PC-9 (cell line): ENCODE measurements at regions of chr2 and their contacts with region 1.

Region 1: DNA sequence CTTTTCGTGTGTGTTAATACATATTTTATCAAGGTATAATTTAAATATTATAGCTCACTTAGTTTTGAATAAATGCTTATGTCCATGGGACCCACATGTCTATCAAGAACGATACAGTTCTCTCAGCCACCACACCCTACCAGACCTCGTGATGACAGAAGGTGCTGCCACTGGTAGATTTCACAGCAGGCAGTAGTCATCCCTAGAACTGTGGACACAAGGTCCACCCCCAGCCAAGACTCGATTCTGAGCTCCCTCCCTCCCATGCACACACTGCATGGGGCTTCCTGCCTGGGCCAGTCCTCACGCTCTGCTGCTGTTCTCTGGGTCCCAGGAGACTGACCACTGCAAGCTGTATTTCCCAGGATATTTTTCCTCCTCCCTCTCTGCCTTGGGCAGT is 26.5 kb upstream of the CREB1 start:
- DNase-seq: no peak
- H3K4me3 ChIP-seq: no peak overlapping the region
- H3K27ac ChIP-seq: no peak overlapping the region
- H3K4me1 ChIP-seq: peaks cover 24% of the 10 kb centered on the region
- H3K27me3 ChIP-seq: no peaks in the 10 kb centered on the region
- CTCF ChIP-seq: no peak

Region 2: GRCh38 chr2:206396211-206396610 is 1107.0 kb before region 1 on chr2:
- CTCF ChIA-PET with region 1: no interaction called
- POLR2A ChIA-PET with region 1: no interaction called
- intact Hi-C with region 1: no loop called
- DNase-seq: no peak
- H3K4me3 ChIP-seq: no peak overlapping the region
- H3K27ac ChIP-seq: no peak overlapping the region
- H3K4me1 ChIP-seq: no peaks in the 10 kb centered on the region
- H3K27me3 ChIP-seq: no peaks in the 10 kb centered on the region
- CTCF ChIP-seq: no peak

Region 3: GRCh38 chr2:207385903-207386302 is 117.3 kb before region 1 on chr2:
- CTCF ChIA-PET with region 1: no interaction called
- POLR2A ChIA-PET with region 1: no interaction called
- intact Hi-C with region 1: no loop called
- DNase-seq: no peak
- H3K4me3 ChIP-seq: no peak overlapping the region
- H3K27ac ChIP-seq: no peak overlapping the region
- H3K4me1 ChIP-seq: no peaks in the 10 kb centered on the region
- H3K27me3 ChIP-seq: no peaks in the 10 kb centered on the region
- CTCF ChIP-seq: no peak

Region 4: GRCh38 chr2:207513551-207514257 is 10.5 kb after region 1 on chr2:
- CTCF ChIA-PET with region 1: no interaction called
- POLR2A ChIA-PET with region 1: no interaction called
- intact Hi-C with region 1: loop called (anchors 1 kb)
- DNase-seq: peak; percentile 15 to 84
- H3K4me3 ChIP-seq: no peak overlapping the region
- H3K27ac ChIP-seq: peak overlapping the region; percentile 77
- H3K4me1 ChIP-seq: peaks cover 34% of the 10 kb centered on the region
- H3K27me3 ChIP-seq: no peaks in the 10 kb centered on the region
- CTCF ChIP-seq: no peak

Region 5: GRCh38 chr2:207589143-207589542 is 85.9 kb after region 1 on chr2:
- CTCF ChIA-PET with region 1: no interaction called
- POLR2A ChIA-PET with region 1: interaction called, 26 read pairs
- intact Hi-C with region 1: no loop called
- DNase-seq: no peak
- H3K4me3 ChIP-seq: no peak overlapping the region
- H3K27ac ChIP-seq: no peak overlapping the region
- H3K4me1 ChIP-seq: no peaks in the 10 kb centered on the region
- H3K27me3 ChIP-seq: no peaks in the 10 kb centered on the region
- CTCF ChIP-seq: no peak